Lower lobe of right lung (tissue), 2 donors: ENCODE measurements at regions of chr4 and their contacts with region 1.

Region 1: DNA sequence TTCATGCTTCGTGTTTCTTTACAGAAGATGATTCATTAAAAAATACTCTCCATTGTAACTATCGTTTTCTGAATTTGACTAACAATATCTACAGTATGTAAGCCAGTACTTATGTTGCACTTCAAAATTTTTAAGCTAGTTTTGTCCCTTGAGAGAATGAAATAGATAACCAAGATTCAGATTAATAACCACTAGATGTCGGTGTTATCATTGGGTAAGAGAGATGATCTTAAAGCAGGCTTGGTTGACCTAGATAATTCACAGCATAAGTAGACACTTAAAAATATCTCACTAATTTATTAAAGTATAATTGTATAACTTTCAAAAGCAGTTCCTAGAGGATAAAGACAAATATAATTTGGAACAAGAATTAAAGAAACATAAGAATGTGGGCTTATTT is 430.9 kb downstream of the C4orf33 start:
- DNase-seq: no peak
- ATAC-seq: peak; percentile 32 to 73
- H3K4me3 ChIP-seq: no peak overlapping the region
- H3K27ac ChIP-seq: no peak overlapping the region
- H3K4me1 ChIP-seq: no peaks in the 10 kb centered on the region
- H3K27me3 ChIP-seq: no peaks in the 10 kb centered on the region
- CTCF ChIP-seq: peak; percentile 53

Region 2: DNA sequence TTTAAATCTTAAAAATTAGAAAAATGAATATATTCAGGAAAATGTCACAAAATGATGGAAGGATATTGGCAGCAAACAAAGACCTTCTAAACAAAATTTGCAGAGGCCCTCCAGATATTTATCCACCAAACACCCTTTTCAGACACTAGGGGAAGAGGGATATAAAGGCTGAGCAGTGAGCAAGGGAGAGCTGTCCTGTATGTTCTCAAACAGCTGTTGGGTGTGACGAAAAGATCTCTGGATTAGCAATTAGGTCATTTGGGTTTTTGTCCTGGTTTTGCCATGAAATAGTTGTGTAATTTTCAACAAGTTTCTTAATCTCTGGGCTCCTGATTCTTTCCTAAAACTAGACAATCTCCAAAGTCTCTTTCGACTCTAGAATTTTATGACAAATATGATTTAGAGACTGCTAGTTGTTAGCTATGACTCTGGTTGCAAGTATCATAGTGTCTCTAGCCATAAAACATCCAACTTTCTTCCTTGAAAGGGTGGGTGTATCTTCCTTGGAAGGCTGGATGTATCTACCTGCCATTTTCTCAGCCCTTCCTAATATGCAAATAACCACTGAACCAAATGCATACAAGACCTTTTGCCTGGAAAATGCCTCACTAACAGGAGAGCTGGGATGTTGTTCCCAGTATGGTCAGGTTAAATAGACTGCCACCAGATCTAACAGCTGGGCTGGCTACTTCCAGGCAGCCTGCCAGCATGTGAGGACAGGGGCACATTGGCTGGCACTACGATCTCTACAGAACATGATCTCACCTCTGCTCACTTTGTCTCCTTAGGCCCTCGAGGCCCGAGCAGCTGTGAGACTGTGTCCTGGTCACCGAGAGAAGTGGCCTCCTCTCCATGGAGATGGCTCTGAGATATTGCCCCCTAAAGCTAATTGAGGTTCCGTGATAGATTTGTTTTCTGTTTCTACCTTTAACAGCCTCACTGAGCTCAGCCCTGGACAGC is 942.8 kb before region 1 on chr4:
- intact Hi-C with region 1: no loop called
- DNase-seq: no peak
- ATAC-seq: no peak
- H3K4me3 ChIP-seq: no peak overlapping the region
- H3K27ac ChIP-seq: no peak overlapping the region
- H3K4me1 ChIP-seq: no peaks in the 10 kb centered on the region
- H3K27me3 ChIP-seq: no peaks in the 10 kb centered on the region
- CTCF ChIP-seq: no peak

Region 3: GRCh38 chr4:129578336-129578735 is 51.5 kb after region 1 on chr4:
- intact Hi-C with region 1: no loop called
- DNase-seq: no peak
- ATAC-seq: no peak
- H3K4me3 ChIP-seq: no peak overlapping the region
- H3K27ac ChIP-seq: no peak overlapping the region
- H3K4me1 ChIP-seq: no peaks in the 10 kb centered on the region
- H3K27me3 ChIP-seq: no peaks in the 10 kb centered on the region
- CTCF ChIP-seq: no peak

Region 4: GRCh38 chr4:129641179-129641578 is 114.4 kb after region 1 on chr4:
- intact Hi-C with region 1: loop called (anchors 10 kb)
- DNase-seq: no peak
- ATAC-seq: peak; percentile 62 to 63
- H3K4me3 ChIP-seq: no peak overlapping the region
- H3K27ac ChIP-seq: no peak overlapping the region
- H3K4me1 ChIP-seq: no peaks in the 10 kb centered on the region
- H3K27me3 ChIP-seq: no peaks in the 10 kb centered on the region
- CTCF ChIP-seq: peak; percentile 82